Heart left ventricle (tissue), 16 donors: ENCODE measurements at regions of chr1 and their contacts with region 1.

Region 1: GRCh38 chr1:205121660-205122488 is at the start of gene RBBP5:
- DNase-seq: peak; percentile 95 to 97 (median 96)
- ATAC-seq: peak; percentile 99
- H3K4me3 ChIP-seq: peak within 1 kb of the TSS; percentile 68 to 96 (median 81)
- H3K27ac ChIP-seq: peak within 1 kb of the TSS; percentile 89 to 98 (median 94)
- H3K4me1 ChIP-seq: peaks cover 7 to 31% (median 26%) of the 10 kb centered on the region in 12 donors
- H3K27me3 ChIP-seq: no peaks in the 10 kb centered on the region
- CTCF ChIP-seq: peak; percentile 41 to 90 (median 61)
- POLR2A ChIP-seq: peak in 1 of 2 donors; percentile 48
- total RNA-seq, gene RBBP5: 8.4 to 12.1 (median 10.1) TPM

Region 2: GRCh38 chr1:204617256-204618147 is 504.4 kb before region 1 on chr1:
- intact Hi-C with region 1: no loop called
- DNase-seq: no peak
- ATAC-seq: peak in 1 of 4 donors; percentile 12
- H3K4me3 ChIP-seq: no peak overlapping the region
- H3K27ac ChIP-seq: no peak overlapping the region
- H3K4me1 ChIP-seq: no peaks in the 10 kb centered on the region
- H3K27me3 ChIP-seq: peaks cover 0 to 9% (median 0%) of the 10 kb centered on the region in 9 donors
- CTCF ChIP-seq: no peak
- POLR2A ChIP-seq: no peak

Region 3: GRCh38 chr1:205066141-205066818 is 55.6 kb before region 1 on chr1:
- intact Hi-C with region 1: no loop called
- DNase-seq: no peak
- ATAC-seq: no peak
- H3K4me3 ChIP-seq: no peak overlapping the region
- H3K27ac ChIP-seq: no peak overlapping the region
- H3K4me1 ChIP-seq: peaks cover 0 to 10% (median 2%) of the 10 kb centered on the region in 12 donors
- H3K27me3 ChIP-seq: no peaks in the 10 kb centered on the region
- CTCF ChIP-seq: no peak
- POLR2A ChIP-seq: no peak

Region 4: DNA sequence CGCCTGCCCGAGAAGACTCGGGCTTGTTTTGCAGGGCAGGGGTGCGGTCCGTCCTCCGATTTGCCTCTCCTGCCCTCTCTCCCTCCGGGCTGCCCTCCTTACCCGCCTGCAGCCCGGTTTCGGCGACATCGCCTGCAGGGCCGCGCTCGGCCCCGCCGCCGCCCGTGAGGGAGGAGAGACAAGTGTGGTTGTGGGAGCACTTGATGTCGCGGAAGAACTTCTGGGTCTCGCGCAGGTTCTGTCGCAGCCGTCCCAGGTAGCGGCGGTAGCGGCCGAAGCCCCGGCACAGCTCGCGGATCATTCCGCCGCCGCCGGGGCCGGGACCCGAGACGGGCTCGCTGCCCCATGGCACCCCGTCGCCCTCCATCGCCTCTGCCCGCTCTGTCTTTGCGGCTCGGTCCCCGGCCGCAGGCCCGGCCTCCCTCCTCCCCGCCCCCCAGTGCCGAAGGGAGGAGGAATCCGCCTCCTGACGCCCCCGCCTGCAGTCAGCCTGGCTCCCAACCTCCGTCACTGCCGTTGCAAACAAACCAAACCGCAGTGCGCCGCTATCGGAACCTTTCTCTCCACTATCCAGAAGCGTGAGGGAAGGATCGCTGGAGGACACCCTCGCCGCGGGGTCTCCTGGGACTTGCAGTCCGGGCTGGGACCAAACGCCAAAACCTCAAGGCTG is 89.4 kb after region 1 on chr1 and contains the start of gene DSTYK:
- intact Hi-C with region 1: loop called in 2 of 10 experiments (anchors 2 kb)
- DNase-seq: peak; percentile 94 to 96 (median 95)
- ATAC-seq: peak; percentile 95 to 99 (median 98)
- H3K4me3 ChIP-seq: peak within 1 kb of the TSS; percentile 67 to 99 (median 90)
- H3K27ac ChIP-seq: peak within 1 kb of the TSS; percentile 60 to 97 (median 90)
- H3K4me1 ChIP-seq: peaks cover 0 to 37% (median 11%) of the 10 kb centered on the region in 12 donors
- H3K27me3 ChIP-seq: no peaks in the 10 kb centered on the region
- CTCF ChIP-seq: peak in 2 of 12 donors; percentile 12 to 25
- POLR2A ChIP-seq: peak; percentile 19 to 70
- total RNA-seq, gene DSTYK: 5.2 to 10.1 (median 8.0) TPM

Region 5: GRCh38 chr1:205227584-205228006 is 105.7 kb after region 1 on chr1 and contains the start of gene TMCC2:
- intact Hi-C with region 1: loop called in 1 of 10 experiments (anchors 10 kb)
- DNase-seq: peak; percentile 88 to 95 (median 93)
- ATAC-seq: peak; percentile 92 to 97 (median 96)
- H3K4me3 ChIP-seq: peak within 1 kb of the TSS; percentile 35 to 71 (median 62)
- H3K27ac ChIP-seq: peak within 1 kb of the TSS in 4 of 12 donors; percentile 3 to 46 (median 18)
- H3K4me1 ChIP-seq: peaks cover 0 to 28% (median 19%) of the 10 kb centered on the region in 12 donors
- H3K27me3 ChIP-seq: peaks cover 0 to 10% (median 0%) of the 10 kb centered on the region in 9 donors
- CTCF ChIP-seq: no peak
- POLR2A ChIP-seq: peak in 1 of 2 donors; percentile 64
- total RNA-seq, gene TMCC2: 0.97 to 5.1 (median 2.1) TPM